A549 (cell line): ENCODE measurements at regions of chr2 and their contacts with region 1.

Region 1: DNA sequence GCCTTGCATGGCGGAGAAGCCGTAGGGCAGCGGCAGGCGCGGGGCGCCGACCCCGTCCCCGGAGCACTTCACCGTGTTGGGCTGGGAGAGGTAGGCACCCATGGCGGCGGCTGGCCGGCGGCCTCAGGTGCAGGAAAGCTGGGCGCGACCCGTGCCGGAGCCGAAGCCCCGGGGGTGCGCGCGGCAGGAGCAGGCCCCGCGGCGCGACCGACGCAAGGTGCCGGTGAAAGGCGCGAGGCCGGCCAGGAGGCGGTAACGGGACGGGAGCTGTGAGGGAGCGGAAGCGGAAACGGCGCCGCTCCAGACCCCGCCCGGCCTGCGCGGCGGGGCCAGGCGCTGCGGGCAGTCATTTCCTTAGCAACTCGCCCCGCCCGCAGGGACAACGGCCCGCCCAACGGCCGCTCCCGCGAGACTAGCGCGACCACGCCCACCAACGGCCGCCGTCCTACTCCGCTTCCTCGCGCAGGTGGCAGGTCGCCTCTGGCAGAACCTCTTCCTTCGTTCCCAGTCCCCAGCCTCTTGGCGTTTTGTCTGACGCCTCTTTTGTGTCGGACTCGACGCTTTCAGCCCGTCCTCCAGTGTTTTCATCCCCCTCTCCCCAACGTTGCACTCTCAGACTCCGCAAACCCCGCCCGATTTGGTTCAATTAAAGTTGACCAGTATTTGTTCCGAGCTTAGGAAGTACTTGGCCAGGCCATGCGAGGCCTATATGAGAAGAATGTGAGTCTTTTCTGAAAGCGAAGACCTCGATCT is at the start of gene PPM1G:
- DNase-seq: peak; percentile 87 to 97
- ATAC-seq: peak; percentile 97
- H3K4me3 ChIP-seq: peak within 1 kb of the TSS; percentile 87
- H3K27ac ChIP-seq: peak within 1 kb of the TSS; percentile 90 to 92
- H3K4me1 ChIP-seq: peaks cover 30% of the 10 kb centered on the region; the same call in 2 of the 3 replicates
- CTCF ChIP-seq: no peak
- EP300 ChIP-seq: no peak
- POLR2A ChIP-seq: peak; percentile 94
- RAD21 ChIP-seq: no peak
- polyA plus RNA-seq, gene PPM1G: 123 and 129 TPM in 2 replicates

Region 2: GRCh38 chr2:27380626-27381545 is 28.6 kb before region 1 on chr2 and contains the start of gene ZNF513:
- CTCF ChIA-PET with region 1: interaction called, 3 read pairs
- POLR2A ChIA-PET with region 1: interaction called, 18 read pairs
- DNase-seq: peak; percentile 94
- ATAC-seq: peak; percentile 81 to 88
- H3K4me3 ChIP-seq: peak within 1 kb of the TSS; percentile 72
- H3K27ac ChIP-seq: peak within 1 kb of the TSS; percentile 92 to 94
- H3K4me1 ChIP-seq: peaks cover 24% of the 10 kb centered on the region
- CTCF ChIP-seq: no peak
- EP300 ChIP-seq: no peak
- POLR2A ChIP-seq: peak; percentile 56
- RAD21 ChIP-seq: no peak
- polyA plus RNA-seq, gene ZNF513: 9.9 and 10.8 TPM in 2 replicates

Region 3: DNA sequence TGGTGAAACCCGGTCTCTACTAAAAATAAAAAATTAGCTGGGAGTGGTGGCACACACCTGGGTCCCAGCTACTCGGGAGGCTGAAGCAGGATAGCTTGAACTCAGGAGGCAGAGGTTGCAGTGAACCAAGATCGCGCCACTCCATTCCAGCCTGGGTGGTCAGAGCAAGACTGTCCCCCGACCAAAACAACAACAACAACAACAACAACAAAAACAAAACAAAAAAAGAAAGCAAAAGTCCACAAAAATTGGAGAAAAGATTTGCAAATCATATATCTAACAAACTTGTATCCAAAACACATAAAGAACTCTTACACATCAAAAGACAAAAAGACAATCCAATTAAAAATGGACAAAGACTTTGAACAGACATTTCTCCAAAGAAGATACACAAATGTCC is 10.5 kb before region 1 on chr2:
- CTCF ChIA-PET with region 1: interaction called, 15 read pairs
- POLR2A ChIA-PET with region 1: interaction called, 4 read pairs
- DNase-seq: no peak
- ATAC-seq: no peak
- H3K4me3 ChIP-seq: no peak overlapping the region
- H3K27ac ChIP-seq: no peak overlapping the region
- H3K4me1 ChIP-seq: 0 out of 3 replicates have a peak, but pooled peaks cover 3% of the 10 kb centered on the region
- CTCF ChIP-seq: no peak
- EP300 ChIP-seq: no peak
- POLR2A ChIP-seq: no peak
- RAD21 ChIP-seq: no peak

Region 4: GRCh38 chr2:27428213-27428977 is 18.9 kb after region 1 on chr2 and contains the start of gene NRBP1:
- CTCF ChIA-PET with region 1: interaction called, 72 read pairs
- POLR2A ChIA-PET with region 1: interaction called, 78 read pairs
- DNase-seq: peak; percentile 88 to 93
- ATAC-seq: peak; percentile 90 to 94
- H3K4me3 ChIP-seq: peak within 1 kb of the TSS; percentile 89
- H3K27ac ChIP-seq: peak within 1 kb of the TSS; percentile 97 to 98
- H3K4me1 ChIP-seq: peaks cover 27% of the 10 kb centered on the region
- CTCF ChIP-seq: peak; percentile 35; the same call in 1 of the 3 replicates
- EP300 ChIP-seq: no peak
- POLR2A ChIP-seq: peak; percentile 93
- RAD21 ChIP-seq: no peak; a peak in 1 of 5 replicates
- polyA plus RNA-seq, gene NRBP1: 229 and 231 TPM in 2 replicates

Region 5: GRCh38 chr2:27489498-27490397 is 80.3 kb after region 1 on chr2 and contains the start of gene IFT172:
- CTCF ChIA-PET with region 1: no interaction called
- POLR2A ChIA-PET with region 1: no interaction called
- DNase-seq: peak; percentile 98 to 100
- ATAC-seq: peak; percentile 91 to 96
- H3K4me3 ChIP-seq: peak within 1 kb of the TSS; percentile 67
- H3K27ac ChIP-seq: peak within 1 kb of the TSS; percentile 62 to 79
- H3K4me1 ChIP-seq: peaks cover 8% of the 10 kb centered on the region; the same call in 2 of the 3 replicates
- CTCF ChIP-seq: no peak
- EP300 ChIP-seq: no peak
- POLR2A ChIP-seq: peak; percentile 38
- RAD21 ChIP-seq: no peak
- polyA plus RNA-seq, gene IFT172: 21.6 and 24.1 TPM in 2 replicates

Region 6: DNA sequence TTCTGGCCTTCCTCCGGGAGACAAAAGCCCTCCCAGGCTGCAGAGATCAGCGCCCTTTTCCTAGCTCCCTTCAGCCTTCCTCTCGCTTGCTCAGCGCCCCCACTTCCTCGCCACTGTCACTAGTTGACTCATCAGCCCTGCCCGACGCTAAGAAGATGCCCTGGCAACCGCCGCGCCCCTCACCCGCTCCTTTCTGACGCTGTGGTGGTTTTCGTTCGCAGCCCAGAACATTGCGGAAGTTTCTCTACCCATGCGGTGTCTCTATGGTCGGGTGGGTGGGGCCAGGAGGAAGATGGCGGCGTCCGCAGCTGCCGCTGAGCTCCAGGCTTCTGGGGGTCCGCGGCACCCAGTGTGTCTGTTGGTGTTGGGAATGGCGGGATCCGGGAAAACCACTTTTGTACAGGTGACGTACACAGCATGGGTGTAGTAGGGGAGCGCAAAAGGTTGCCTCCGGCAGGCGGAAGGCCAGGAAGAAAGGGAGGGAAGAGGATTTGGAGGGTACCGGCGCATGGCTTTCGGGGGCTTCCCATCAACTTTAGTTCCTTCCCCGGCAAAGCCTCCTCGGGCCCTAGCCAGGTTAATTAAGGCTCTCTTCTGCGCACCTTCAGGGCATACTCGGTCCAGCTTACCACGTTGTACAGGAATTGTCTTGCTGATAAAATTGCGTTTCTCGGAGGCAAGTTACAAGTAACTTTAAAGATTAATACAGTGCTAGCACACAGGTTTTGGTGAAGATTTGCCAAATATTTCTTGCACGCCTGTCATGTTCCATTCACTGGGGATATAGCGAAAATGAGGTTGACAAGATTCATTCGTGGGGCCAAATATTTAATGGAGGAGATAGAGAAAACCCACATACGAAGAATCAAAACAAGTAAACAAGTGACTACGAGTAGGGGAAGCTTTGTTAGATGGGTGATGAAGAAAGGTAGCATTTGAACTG is 219.5 kb after region 1 on chr2 and contains the starts of genes CCDC121 and GPN1:
- CTCF ChIA-PET with region 1: interaction called, 3 read pairs
- POLR2A ChIA-PET with region 1: interaction called, 11 read pairs
- DNase-seq: peak; percentile 87 to 91
- ATAC-seq: peak; percentile 92 to 98
- H3K4me3 ChIP-seq: peak within 1 kb of the TSS; percentile 80
- H3K27ac ChIP-seq: peak within 1 kb of the TSS; percentile 87 to 93
- H3K4me1 ChIP-seq: peaks cover 14% of the 10 kb centered on the region
- CTCF ChIP-seq: no peak
- EP300 ChIP-seq: no peak
- POLR2A ChIP-seq: peak; percentile 99
- RAD21 ChIP-seq: no peak
- polyA plus RNA-seq, gene CCDC121: 7.2 and 7.8 TPM in 2 replicates
- polyA plus RNA-seq, gene GPN1: 98.9 and 117 TPM in 2 replicates